Mammary epithelial cell (primary cell): ENCODE measurements at regions of chr19 and their contacts with region 1.

Region 1: GRCh38 chr19:29528350-29528945 is 2.7 kb downstream of the VSTM2B start:
- DNase-seq: peak; percentile 55
- H3K4me3 ChIP-seq: peak overlapping the region in 1 of 3 experiments; percentile 6
- H3K27ac ChIP-seq: no peak overlapping the region
- H3K4me1 ChIP-seq: peaks cover 7% of the 10 kb centered on the region
- H3K27me3 ChIP-seq: peaks cover 58% of the 10 kb centered on the region
- CTCF ChIP-seq: peak; percentile 50 to 64

Region 2: DNA sequence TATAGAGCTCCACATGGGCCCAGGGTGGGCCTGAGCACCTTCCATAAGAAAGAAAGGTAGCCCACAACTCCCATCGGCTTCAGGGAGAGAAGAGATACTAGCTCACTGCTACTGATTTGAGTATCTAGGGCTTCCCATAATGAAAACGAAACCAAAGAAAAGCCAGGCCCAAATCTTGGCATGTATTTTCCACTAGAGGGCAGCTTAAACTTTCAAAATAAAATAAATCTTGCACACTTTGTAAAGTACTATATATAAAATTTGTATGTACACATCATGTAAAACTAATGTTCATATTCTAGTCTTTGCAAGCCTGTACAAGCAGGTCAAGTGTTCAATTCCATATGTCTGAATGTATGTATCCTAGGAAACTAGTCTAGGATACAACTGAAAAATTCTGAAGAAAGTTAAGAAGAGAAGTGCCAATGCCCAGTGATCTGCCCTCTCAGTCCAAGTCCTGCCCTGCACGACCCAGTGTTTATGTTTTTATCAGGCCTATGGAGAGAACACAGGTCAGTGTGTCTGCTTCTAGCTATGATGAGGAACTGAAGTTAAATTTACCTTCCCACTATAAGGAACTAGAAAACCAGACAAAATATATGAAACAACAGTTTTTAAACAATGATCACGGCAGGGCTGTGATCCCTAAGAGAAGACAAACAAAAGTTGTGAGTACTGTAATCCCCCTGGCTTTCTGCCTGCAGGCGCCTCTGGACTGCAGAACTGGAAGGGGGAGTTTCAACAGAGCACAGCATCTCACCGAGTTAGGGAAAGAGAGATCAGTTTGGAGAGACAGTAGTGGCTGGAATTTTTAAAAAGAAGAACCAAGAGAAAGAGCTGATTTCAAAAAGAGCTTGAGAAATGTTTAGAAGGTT is 791.2 kb before region 1 on chr19:
- CTCF ChIA-PET with region 1: no interaction called
- dilution Hi-C with region 1: no loop called
- in situ Hi-C with region 1: no loop called
- intact Hi-C with region 1: loop called (anchors 1 kb)
- DNase-seq: peak; percentile 28
- H3K4me3 ChIP-seq: no peak overlapping the region
- H3K27ac ChIP-seq: no peak overlapping the region
- H3K4me1 ChIP-seq: no peaks in the 10 kb centered on the region
- H3K27me3 ChIP-seq: no peaks in the 10 kb centered on the region
- CTCF ChIP-seq: peak; percentile 45 to 51

Region 3: DNA sequence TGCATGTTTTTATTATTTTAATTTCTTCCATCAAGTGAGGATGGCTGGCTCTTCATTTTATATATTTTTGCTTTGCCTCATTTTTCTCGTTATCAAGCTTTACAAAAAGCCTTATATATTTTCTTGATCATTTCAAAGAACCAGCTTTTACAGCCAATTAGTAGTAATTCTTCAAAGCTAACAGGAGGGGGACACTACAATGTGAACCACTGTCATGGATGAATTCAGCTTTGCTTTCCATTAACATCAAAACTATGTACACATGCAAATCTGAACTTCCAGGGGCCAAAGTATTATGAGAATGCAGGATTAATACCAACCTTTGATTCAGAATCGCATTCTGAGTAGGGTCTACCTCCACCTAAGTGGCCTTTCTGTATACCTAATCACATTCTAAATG is 326.6 kb before region 1 on chr19:
- CTCF ChIA-PET with region 1: no interaction called
- dilution Hi-C with region 1: no loop called
- in situ Hi-C with region 1: no loop called
- intact Hi-C with region 1: loop called (anchors 5 kb)
- DNase-seq: no peak
- H3K4me3 ChIP-seq: no peak overlapping the region
- H3K27ac ChIP-seq: no peak overlapping the region
- H3K4me1 ChIP-seq: no peaks in the 10 kb centered on the region
- H3K27me3 ChIP-seq: no peaks in the 10 kb centered on the region
- CTCF ChIP-seq: no peak

Region 4: GRCh38 chr19:29446361-29446760 is 82.1 kb before region 1 on chr19:
- CTCF ChIA-PET with region 1: no interaction called
- dilution Hi-C with region 1: no loop called
- in situ Hi-C with region 1: no loop called
- intact Hi-C with region 1: no loop called
- DNase-seq: no peak
- H3K4me3 ChIP-seq: no peak overlapping the region
- H3K27ac ChIP-seq: no peak overlapping the region
- H3K4me1 ChIP-seq: no peaks in the 10 kb centered on the region
- H3K27me3 ChIP-seq: no peaks in the 10 kb centered on the region
- CTCF ChIP-seq: no peak

Region 5: GRCh38 chr19:29483944-29484581 is 44.4 kb before region 1 on chr19:
- CTCF ChIA-PET with region 1: no interaction called
- dilution Hi-C with region 1: no loop called
- in situ Hi-C with region 1: no loop called
- intact Hi-C with region 1: no loop called
- DNase-seq: no peak
- H3K4me3 ChIP-seq: no peak overlapping the region
- H3K27ac ChIP-seq: no peak overlapping the region
- H3K4me1 ChIP-seq: no peaks in the 10 kb centered on the region
- H3K27me3 ChIP-seq: no peaks in the 10 kb centered on the region
- CTCF ChIP-seq: no peak

Region 6: DNA sequence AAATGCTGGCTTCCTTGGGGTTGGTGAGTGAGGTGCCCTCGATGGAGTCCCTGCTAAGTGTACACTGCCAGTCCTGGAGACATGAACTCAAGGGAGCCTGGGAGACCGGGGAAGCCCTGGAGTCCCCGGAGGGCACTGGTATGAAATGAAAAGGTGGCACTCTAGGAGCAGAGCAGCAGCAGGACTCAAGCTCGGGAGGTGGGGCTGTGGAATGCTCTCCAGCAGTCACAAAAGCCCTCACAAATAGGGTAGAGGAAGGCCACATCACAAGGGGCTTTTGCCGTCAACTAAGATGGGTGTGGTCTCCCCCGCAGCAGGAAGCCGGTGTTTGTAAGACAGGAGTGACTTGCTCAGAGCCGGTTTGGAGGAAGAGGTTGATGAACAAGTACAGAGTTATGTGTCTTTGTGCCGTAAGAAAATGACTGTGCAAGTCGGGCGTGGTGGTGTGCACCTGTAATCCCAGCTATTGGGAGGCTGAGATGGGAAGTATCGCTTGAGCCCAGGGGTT is 302.6 kb after region 1 on chr19:
- CTCF ChIA-PET with region 1: no interaction called
- dilution Hi-C with region 1: no loop called
- in situ Hi-C with region 1: no loop called
- intact Hi-C with region 1: no loop called
- DNase-seq: peak; percentile 63
- H3K4me3 ChIP-seq: no peak overlapping the region
- H3K27ac ChIP-seq: no peak overlapping the region
- H3K4me1 ChIP-seq: no peaks in the 10 kb centered on the region
- H3K27me3 ChIP-seq: no peaks in the 10 kb centered on the region
- CTCF ChIP-seq: no peak